Sigmoid colon (tissue), 7 donors: ENCODE measurements at regions of chr9 and their contacts with region 1.

Region 1: GRCh38 chr9:77910194-77910621 is 121.4 kb downstream of the GNAQ start:
- DNase-seq: no peak
- H3K4me3 ChIP-seq: no peak overlapping the region
- H3K27ac ChIP-seq: no peak overlapping the region
- H3K4me1 ChIP-seq: peaks cover 0 to 51% (median 17%) of the 10 kb centered on the region in 4 donors
- H3K27me3 ChIP-seq: no peaks in the 10 kb centered on the region
- CTCF ChIP-seq: no peak
- EP300 ChIP-seq: no peak
- POLR2A ChIP-seq: no peak

Region 2: DNA sequence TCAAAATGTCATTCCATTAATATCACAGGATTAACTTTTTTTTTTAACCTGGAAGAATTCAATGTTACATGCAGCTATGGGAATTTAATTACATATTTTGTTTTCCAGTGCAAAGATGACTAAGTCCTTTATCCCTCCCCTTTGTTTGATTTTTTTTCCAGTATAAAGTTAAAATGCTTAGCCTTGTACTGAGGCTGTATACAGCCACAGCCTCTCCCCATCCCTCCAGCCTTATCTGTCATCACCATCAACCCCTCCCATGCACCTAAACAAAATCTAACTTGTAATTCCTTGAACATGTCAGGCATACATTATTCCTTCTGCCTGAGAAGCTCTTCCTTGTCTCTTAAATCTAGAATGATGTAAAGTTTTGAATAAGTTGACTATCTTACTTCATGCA is 1125.3 kb before region 1 on chr9:
- intact Hi-C with region 1: no loop called
- DNase-seq: no peak
- H3K4me3 ChIP-seq: no peak overlapping the region
- H3K27ac ChIP-seq: no peak overlapping the region
- H3K4me1 ChIP-seq: peaks cover 0 to 20% (median 0%) of the 10 kb centered on the region in 4 donors
- H3K27me3 ChIP-seq: no peaks in the 10 kb centered on the region
- CTCF ChIP-seq: no peak
- EP300 ChIP-seq: no peak
- POLR2A ChIP-seq: no peak

Region 3: DNA sequence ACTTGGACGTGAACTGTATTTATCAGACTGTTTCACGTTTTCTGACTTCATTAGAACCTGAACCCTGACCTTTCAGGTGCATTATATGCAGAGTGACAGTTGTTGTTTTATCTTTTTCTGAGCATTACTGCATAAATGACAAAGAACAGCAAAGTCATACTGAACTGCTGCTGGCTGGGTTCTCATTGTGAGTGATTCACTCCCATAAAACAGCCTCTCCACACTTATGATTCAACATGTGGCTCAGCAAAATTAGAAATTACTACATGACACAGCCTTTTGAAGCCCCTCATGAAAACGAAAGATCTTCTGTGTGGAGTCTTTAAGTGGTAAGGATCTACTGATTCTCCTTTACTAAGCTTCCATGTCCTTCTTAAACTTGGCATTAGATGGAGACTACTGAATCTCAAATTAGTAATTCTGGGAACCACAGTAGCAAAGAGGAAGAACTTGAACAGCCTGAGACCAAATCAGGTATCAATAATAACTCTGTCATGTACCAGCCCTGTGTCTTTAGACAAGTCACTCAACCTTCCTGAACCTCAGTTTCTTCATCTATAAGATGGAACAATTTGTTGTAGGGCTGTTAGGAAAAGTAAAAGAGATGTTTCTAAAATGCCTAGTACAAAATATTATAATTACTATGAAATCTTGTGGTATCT is 89.8 kb before region 1 on chr9:
- intact Hi-C with region 1: no loop called
- DNase-seq: no peak
- H3K4me3 ChIP-seq: no peak overlapping the region
- H3K27ac ChIP-seq: peak overlapping the region in 3 of 4 donors; percentile 5 to 49 (median 17)
- H3K4me1 ChIP-seq: peaks cover 0 to 25% (median 18%) of the 10 kb centered on the region in 4 donors
- H3K27me3 ChIP-seq: no peaks in the 10 kb centered on the region
- CTCF ChIP-seq: no peak
- EP300 ChIP-seq: no peak
- POLR2A ChIP-seq: no peak

Region 4: DNA sequence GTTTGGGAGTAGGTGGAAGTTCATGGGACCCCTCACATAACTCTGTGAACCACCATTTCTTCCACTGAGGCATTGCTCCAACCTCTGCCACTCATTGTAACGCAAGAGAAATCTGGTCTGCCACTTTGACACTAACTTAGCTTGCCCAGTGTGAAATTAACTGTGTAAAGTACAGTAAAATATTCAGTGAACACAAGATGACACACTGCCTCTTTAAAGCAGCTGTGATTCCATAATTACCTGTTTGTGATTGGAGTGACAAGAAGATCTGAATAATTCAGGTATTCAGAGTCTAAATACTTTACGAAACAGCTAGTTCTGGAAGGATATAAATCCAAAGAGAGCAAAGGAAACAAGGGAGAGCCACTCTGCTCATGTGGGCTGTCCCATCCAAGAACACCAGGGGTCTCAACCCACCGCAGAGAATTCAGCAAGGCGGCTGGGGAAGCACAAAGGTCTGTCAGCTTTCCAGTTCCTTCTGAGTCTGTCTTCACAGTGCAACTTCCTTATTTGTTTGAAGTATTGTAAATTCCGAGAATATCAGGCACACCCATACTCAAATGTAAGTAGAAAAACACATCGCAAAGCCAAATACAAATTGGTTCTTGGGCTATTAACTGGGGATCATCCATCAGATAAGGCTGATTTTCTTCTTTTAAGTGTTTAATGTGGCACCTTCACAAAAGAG is 34.5 kb after region 1 on chr9:
- intact Hi-C with region 1: loop called (anchors 5 kb)
- DNase-seq: no peak
- H3K4me3 ChIP-seq: no peak overlapping the region
- H3K27ac ChIP-seq: peak overlapping the region; percentile 17 to 66 (median 51)
- H3K4me1 ChIP-seq: peaks cover 0 to 64% (median 55%) of the 10 kb centered on the region in 4 donors
- H3K27me3 ChIP-seq: no peaks in the 10 kb centered on the region
- CTCF ChIP-seq: no peak
- EP300 ChIP-seq: no peak
- POLR2A ChIP-seq: no peak